Dendritic cell treated with granulocyte-macrophage colony-stimulating factor and Interleukin-4, amounts not matched to agents 40 ng/mL and 50 ng/mL, for 4 days (primary cell): ENCODE measurements at regions of chr9 and their contacts with region 1.

Region 1: DNA sequence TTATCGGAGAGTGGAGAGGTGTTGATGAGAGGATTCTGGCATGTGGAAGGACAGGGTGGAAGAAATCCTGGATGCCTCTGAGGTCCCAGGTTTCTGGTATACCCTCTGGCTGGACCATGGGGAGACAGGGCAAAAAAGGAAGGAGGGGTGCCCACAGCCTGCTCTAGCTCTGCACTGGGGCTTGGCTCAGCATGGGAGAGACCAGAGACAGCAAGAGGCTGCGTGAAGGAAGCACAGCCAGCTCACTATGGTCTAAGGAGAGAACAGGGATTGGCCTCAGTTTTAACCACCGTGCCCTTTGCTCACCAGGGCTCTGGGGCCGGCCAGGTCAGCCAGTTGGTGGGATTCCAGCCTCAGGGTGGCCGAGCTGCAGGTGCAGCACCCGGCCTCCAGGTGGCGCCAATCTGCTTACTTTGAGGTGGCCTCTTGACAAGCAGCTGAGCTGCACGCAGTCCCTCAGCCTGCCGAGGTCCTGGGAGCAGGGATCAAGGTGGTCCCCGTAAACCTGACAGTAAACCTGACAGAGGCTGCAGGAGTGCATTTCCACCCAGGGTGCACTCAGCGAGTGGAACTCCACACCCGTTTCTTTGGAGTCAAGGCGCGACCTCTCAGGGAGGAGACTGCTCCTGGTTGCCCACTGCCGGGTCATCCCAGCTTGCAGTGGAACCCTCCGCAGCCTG is 25.0 kb upstream of the SPTLC1 start:
- H3K4me3 Mint-ChIP-seq: no peak overlapping the region
- H3K27ac Mint-ChIP-seq: no peak overlapping the region
- H3K4me1 Mint-ChIP-seq: peaks cover 13% of the 10 kb centered on the region
- H3K27me3 Mint-ChIP-seq: peaks cover 49% of the 10 kb centered on the region

Region 2: DNA sequence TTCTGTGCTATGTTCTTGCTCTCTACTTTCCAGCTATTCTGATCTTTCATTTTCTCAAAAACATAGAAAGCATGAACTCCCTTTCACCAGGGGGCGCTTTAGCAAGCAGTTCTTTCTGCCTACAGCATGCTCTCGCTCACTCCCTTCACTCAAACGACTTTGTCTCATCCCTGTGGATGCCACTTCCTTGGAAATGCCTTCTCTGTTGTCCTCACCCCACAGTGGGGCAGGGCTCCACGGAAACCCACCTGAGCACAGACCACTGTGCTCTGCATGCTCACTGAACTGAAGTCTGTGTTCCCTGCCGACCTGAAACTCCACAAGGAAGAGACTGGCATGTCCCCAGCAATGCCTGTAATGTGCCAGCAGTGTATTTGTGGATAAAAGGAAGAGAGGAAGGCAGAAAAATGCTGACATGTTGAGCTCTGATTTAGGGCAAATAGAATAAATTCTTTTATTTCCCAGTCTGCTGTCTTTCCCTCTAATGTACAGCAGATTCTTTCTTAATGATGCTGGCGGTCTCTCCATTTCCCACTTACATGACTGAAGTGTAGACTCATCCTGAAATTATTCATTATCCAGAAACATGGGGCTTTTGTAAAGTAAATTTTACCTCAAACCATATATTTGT is 185.3 kb before region 1 on chr9:
- intact Hi-C with region 1: no loop called
- H3K4me3 Mint-ChIP-seq: no peak overlapping the region
- H3K27ac Mint-ChIP-seq: no peak overlapping the region
- H3K4me1 Mint-ChIP-seq: peaks cover 11% of the 10 kb centered on the region
- H3K27me3 Mint-ChIP-seq: peaks cover 43% of the 10 kb centered on the region

Region 3: DNA sequence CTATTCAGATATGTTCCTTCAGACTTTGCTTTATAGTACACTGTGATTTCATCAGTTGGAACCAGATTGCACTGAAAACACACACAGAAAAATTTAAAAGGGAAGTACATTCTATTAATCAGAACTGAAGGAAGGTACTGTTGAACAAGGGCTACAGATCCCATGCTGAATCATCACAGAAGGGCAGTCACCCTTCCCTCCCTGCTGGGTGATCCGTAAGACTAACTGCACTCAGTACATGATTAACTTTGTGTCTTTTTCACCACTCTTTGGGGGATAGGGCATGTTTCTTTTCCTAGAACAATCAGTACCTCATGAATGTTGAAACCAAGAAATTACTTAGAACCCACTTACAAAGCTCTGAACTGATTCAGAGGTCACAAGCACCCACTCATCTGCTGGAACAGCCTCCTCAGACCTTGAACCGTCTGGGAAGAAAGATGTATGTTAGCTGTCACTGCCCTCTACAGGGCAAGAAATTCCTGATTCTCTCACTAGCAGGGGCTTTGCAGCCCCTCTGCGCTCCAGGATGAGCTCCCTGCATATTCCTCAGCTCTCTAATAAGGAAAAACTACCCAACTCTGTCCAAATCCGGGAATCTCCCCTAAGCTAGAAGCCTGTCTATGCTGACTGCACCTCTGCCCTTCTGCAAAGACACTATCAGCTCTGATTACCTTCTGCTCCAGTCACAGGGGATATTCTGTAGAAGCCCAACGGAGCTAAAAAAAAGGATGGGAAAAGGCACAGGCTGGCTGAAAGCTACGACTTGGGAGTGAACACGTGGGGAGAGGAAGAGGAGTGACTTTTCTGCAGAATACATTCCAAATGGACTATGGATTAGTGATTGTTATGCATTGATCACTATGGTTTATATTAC is 102.3 kb after region 1 on chr9:
- intact Hi-C with region 1: loop called (anchors 5 kb)
- H3K4me3 Mint-ChIP-seq: no peak overlapping the region
- H3K27ac Mint-ChIP-seq: no peak overlapping the region
- H3K4me1 Mint-ChIP-seq: no peaks in the 10 kb centered on the region
- H3K27me3 Mint-ChIP-seq: no peaks in the 10 kb centered on the region